Sciatic nerve (tissue), 2 donors: ENCODE measurements at regions of chr4 and their contacts with region 1.

Region 1: DNA sequence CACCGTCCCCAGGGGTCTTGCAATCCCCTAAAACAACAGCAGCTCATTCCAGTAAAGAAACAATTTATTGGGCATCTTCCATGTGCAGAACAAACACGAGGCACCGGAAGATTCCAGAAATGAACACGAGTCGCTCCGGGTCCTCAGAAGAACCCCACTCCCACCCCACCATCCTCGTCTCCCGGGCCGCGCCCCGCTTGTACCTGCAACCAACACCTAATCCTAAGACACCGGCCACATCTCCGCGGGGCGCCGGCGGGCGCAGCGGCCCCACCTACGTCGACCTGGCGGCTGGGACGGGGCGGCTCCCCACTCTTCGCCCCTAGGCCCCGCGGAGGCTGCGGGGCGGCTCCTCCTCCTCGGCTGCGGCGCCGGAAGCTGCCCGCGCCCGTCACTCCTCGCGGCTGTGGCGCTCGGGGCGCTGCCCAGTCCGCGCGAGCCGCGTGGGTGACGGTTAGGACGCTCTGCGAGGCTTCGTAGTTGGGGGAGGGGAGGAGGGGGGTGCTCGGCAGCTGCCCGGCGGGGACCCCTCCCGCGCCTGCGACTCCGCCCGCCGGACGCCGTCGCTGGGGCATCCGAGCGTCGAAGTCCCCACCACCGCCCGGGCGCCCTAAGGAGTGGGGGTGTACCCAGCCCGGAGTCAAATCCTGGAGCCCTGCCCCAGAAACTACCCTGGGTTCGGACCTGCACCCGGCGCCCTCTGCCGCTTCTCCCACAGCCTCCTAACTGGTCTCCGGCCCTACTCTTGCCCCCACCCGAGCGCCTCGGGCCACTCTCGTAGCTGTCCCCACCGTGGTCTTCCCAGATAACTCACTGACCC is at the start of gene CCDC158:
- DNase-seq: no peak
- ATAC-seq: peak; percentile 84
- total RNA-seq, gene CCDC158: 1.9 TPM

Region 2: DNA sequence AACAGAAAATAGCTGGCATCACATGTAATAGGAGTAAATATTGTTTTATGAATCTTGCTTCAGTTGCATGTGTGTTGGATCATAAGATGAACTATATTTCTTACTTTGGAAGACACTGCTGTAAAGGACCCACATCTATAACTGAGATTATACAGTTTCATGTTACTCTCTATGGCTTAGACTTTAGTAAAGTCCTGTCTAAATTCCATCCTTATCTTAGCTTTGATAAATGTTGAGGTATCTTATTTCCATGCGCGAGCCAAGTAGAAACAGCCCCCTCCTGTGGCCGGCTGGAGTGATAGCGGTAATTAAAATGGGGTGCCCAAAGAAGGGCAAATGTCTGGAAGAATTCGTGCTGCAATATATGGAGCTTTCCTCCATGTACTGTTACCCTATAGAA is 43.1 kb before region 1 on chr4:
- intact Hi-C with region 1: loop called (anchors 1 kb)
- DNase-seq: no peak
- ATAC-seq: no peak

Region 3: GRCh38 chr4:76447393-76447851 is 26.4 kb after region 1 on chr4:
- intact Hi-C with region 1: no loop called
- DNase-seq: no peak
- ATAC-seq: peak; percentile 72

Region 4: GRCh38 chr4:76723924-76724323 is 303.0 kb after region 1 on chr4:
- intact Hi-C with region 1: no loop called
- DNase-seq: no peak
- ATAC-seq: peak; percentile 91